T-cell (primary cell): ENCODE measurements at regions of chrX and their contacts with region 1.

Region 1: DNA sequence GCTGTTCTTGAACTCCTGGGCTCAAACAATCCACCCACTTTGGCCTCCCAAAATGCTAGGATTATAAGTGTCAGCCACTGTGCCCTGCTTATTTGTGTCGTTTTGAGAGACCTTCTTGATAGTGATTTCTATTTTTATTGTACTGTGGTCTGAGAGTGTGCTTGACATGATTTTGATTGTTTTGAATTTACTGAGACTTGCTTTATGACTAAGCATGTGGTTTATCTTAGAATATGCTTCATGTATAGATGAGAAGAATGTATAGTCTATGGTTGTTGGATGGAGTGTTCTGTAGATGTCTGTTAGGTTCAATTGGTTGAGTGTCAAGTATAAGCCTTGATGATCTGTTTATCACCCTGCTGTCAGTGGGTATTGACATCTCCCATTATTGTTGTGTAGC is 789.3 kb downstream of the IL1RAPL1 start:
- DNase-seq: no peak
- ATAC-seq: no peak
- H3K4me3 ChIP-seq: no peak overlapping the region
- H3K4me3 Mint-ChIP-seq: no peak overlapping the region
- H3K27ac ChIP-seq: no peak overlapping the region
- H3K27ac Mint-ChIP-seq: no peak overlapping the region
- H3K4me1 ChIP-seq: no peaks in the 10 kb centered on the region
- H3K4me1 Mint-ChIP-seq: no peaks in the 10 kb centered on the region
- H3K27me3 ChIP-seq: no peaks in the 10 kb centered on the region
- H3K27me3 Mint-ChIP-seq: no peaks in the 10 kb centered on the region

Region 2: GRCh38 chrX:27575565-27575964 is 1801.0 kb before region 1 on chrX:
- CTCF ChIA-PET with region 1: no interaction called
- POLR2A ChIA-PET with region 1: no interaction called
- DNase-seq: no peak
- ATAC-seq: no peak
- H3K4me3 ChIP-seq: no peak overlapping the region
- H3K4me3 Mint-ChIP-seq: no peak overlapping the region
- H3K27ac ChIP-seq: no peak overlapping the region
- H3K27ac Mint-ChIP-seq: no peak overlapping the region
- H3K4me1 ChIP-seq: no peaks in the 10 kb centered on the region
- H3K4me1 Mint-ChIP-seq: no peaks in the 10 kb centered on the region
- H3K27me3 ChIP-seq: no peaks in the 10 kb centered on the region
- H3K27me3 Mint-ChIP-seq: peaks cover 0 to 4% of the 10 kb centered on the region in 2 donors

Region 3: GRCh38 chrX:29348288-29348687 is 28.3 kb before region 1 on chrX:
- CTCF ChIA-PET with region 1: no interaction called
- POLR2A ChIA-PET with region 1: no interaction called
- DNase-seq: no peak
- ATAC-seq: no peak
- H3K4me3 ChIP-seq: no peak overlapping the region
- H3K4me3 Mint-ChIP-seq: no peak overlapping the region
- H3K27ac ChIP-seq: no peak overlapping the region
- H3K27ac Mint-ChIP-seq: no peak overlapping the region
- H3K4me1 ChIP-seq: no peaks in the 10 kb centered on the region
- H3K4me1 Mint-ChIP-seq: no peaks in the 10 kb centered on the region
- H3K27me3 ChIP-seq: no peaks in the 10 kb centered on the region
- H3K27me3 Mint-ChIP-seq: no peaks in the 10 kb centered on the region

Region 4: GRCh38 chrX:29359276-29359675 is 17.3 kb before region 1 on chrX:
- CTCF ChIA-PET with region 1: no interaction called
- POLR2A ChIA-PET with region 1: interaction called in 1 of 2 experiments, 11 read pairs
- DNase-seq: no peak
- ATAC-seq: no peak
- H3K4me3 ChIP-seq: no peak overlapping the region
- H3K4me3 Mint-ChIP-seq: no peak overlapping the region
- H3K27ac ChIP-seq: no peak overlapping the region
- H3K27ac Mint-ChIP-seq: no peak overlapping the region
- H3K4me1 ChIP-seq: no peaks in the 10 kb centered on the region
- H3K4me1 Mint-ChIP-seq: no peaks in the 10 kb centered on the region
- H3K27me3 ChIP-seq: no peaks in the 10 kb centered on the region
- H3K27me3 Mint-ChIP-seq: peaks cover 0 to 6% of the 10 kb centered on the region in 2 donors